AG04449 (cell line): ENCODE measurements at regions of chr17 and their contacts with region 1.

Region 1: GRCh38 chr17:35612924-35613521 is 25.9 kb downstream of the AP2B1 start:
- DNase-seq: peak; percentile 4
- H3K4me3 ChIP-seq: no peak overlapping the region
- CTCF ChIP-seq: peak; percentile 53

Region 2: GRCh38 chr17:35587074-35587971 is 25.7 kb before region 1 on chr17 and contains the start of gene AP2B1:
- CTCF ChIA-PET with region 1: interaction called, 22 read pairs
- POLR2A ChIA-PET with region 1: no interaction called
- DNase-seq: peak; percentile 77
- H3K4me3 ChIP-seq: peak within 1 kb of the TSS; percentile 96
- CTCF ChIP-seq: no peak

Region 3: DNA sequence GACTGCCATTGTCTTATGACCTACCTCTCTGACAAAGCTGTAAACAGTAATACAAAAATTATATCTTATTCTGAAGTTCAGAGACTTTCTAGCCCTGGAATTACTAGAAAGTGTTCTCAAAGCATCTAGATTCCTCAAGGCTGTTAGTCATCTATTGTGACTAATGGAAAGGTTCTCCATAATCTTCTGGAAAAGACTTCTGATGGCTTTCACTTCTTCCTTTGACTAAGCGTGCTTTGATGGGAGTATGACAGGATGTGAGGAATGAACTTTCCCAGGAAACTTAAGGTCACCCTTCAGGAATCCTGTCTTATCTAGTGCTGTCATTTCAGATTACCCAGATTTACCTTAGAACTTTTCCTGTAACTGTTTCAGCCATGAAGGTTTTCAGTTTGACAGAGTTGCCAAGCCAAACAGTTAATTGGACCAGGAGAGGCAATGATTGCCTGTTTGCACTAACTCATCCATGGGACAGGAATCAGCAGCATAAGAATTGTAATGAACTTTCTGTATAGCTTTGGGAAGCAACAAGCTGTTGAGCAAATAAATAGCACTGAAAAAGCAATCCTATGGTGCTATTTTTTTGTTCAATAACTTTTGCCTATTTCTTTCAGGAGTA is 17.6 kb after region 1 on chr17:
- CTCF ChIA-PET with region 1: interaction called, 81 read pairs
- POLR2A ChIA-PET with region 1: no interaction called
- DNase-seq: no peak
- H3K4me3 ChIP-seq: no peak overlapping the region
- CTCF ChIP-seq: no peak

Region 4: GRCh38 chr17:35666070-35666469 is 53.0 kb after region 1 on chr17:
- CTCF ChIA-PET with region 1: interaction called, 11 read pairs
- POLR2A ChIA-PET with region 1: no interaction called
- DNase-seq: no peak
- H3K4me3 ChIP-seq: no peak overlapping the region
- CTCF ChIP-seq: no peak

Region 5: DNA sequence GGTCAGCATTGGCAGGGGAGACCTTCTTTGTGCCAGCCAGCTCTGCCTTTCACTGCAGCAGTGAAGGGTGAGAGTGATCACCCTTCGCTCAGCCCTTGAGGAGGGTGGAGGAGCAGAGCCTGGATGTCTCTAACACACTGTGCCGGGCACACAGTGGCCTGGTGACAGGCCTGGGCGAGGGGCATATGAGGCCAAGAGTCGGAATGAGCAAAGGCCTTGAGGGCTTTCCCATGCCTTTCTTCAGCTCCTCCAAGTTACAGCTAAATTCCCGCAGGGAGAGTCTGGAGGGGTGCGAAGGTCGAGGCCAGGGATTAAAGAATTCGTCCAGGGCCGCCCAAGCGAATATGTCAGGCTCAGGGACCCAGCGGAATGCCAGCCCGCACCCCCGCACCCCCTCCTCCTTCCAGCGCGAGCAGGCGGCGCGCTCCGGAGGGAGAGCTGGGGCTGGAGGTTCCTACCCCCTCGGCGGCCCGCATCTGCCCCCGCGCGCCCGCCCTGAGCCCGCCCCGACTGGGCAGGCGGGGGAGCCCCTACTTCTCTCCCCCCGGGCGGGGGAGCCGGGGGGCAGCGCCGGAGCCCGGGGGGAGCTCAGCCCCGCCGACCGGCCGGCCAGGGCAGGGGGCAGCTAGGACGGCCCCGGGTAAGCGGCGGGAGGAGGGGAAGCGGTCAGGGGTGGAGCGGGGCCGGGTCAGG is 118.4 kb after region 1 on chr17 and contains the start of gene RASL10B:
- CTCF ChIA-PET with region 1: interaction called, 43 read pairs
- POLR2A ChIA-PET with region 1: no interaction called
- DNase-seq: no peak
- H3K4me3 ChIP-seq: peak within 1 kb of the TSS; percentile 64
- CTCF ChIP-seq: no peak

Region 6: GRCh38 chr17:35752945-35753764 is 140.1 kb after region 1 on chr17 and contains the start of gene GAS2L2:
- CTCF ChIA-PET with region 1: interaction called, 565 read pairs
- POLR2A ChIA-PET with region 1: interaction called, 5 read pairs
- DNase-seq: no peak
- H3K4me3 ChIP-seq: no peak within 1 kb of the TSS
- CTCF ChIP-seq: no peak

Region 7: DNA sequence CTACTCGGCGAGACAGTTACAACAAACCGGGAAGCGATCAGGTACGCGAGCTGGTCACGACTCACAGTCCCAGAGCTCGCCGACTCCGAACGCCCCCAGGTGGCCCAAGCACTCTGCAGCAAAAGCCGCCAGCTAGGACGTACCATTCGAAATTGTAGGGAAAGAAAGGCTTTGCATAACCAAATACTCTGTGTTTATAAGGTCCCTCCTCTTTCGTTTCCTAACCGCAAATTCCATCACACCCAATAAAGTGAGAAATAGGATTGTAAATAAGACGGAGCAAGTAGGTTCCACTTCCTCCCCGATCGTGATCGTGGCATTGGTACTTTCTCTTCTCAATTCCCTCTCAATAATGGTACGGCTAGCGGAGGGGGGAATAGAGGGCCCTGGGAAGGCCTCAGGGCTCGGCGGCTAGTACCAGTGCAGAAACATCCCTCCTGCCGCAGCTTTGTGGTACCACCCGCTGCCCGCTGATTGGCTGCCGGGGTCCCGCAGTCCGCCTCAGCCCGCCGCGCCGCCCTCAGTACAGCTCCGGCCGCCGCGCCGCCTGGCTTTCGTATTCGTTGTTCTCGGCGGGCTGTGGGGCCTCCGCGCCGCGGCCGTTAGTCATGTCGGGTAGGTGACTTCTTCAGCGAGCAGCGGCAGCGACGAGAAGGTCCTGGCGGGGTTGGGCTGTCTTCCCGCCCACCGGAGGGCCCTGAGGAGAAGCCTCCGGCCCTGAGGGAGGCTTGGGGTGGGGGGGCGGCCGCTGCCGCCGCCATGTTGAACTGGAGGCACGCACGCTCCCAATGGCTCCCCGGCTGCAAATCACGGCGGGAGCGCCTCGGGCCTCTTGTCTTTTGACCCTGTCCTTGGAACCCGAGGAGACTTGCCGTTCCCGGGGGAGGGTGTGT is 196.2 kb after region 1 on chr17 and contains the start of gene TAF15:
- CTCF ChIA-PET with region 1: interaction called, 14 read pairs
- POLR2A ChIA-PET with region 1: no interaction called
- DNase-seq: peak; percentile 95
- H3K4me3 ChIP-seq: peak within 1 kb of the TSS; percentile 88
- CTCF ChIP-seq: peak; percentile 83